ENCODE measurements at regions of chr5 and their contacts with region 1.

Region 1: GRCh38 chr5:31934156-31934555 is 240.0 kb downstream of the GOLPH3 start:
- DNase-seq: peak; percentile 46 to 60
- H3K4me3 ChIP-seq: no peak overlapping the region
- H3K27ac ChIP-seq: peak overlapping the region; percentile 50 to 74
- H3K4me1 ChIP-seq: no peaks in the 10 kb centered on the region
- H3K27me3 ChIP-seq: no peaks in the 10 kb centered on the region
- CTCF ChIP-seq: no peak
- POLR2A ChIP-seq: no peak

Region 2: GRCh38 chr5:31680528-31680927 is 253.6 kb before region 1 on chr5:
- intact Hi-C with region 1: no loop called
- DNase-seq: peak in 1 of 2 donors; percentile 21
- H3K4me3 ChIP-seq: no peak overlapping the region
- H3K27ac ChIP-seq: no peak overlapping the region
- H3K4me1 ChIP-seq: no peaks in the 10 kb centered on the region
- H3K27me3 ChIP-seq: no peaks in the 10 kb centered on the region
- CTCF ChIP-seq: no peak
- POLR2A ChIP-seq: no peak

Region 3: DNA sequence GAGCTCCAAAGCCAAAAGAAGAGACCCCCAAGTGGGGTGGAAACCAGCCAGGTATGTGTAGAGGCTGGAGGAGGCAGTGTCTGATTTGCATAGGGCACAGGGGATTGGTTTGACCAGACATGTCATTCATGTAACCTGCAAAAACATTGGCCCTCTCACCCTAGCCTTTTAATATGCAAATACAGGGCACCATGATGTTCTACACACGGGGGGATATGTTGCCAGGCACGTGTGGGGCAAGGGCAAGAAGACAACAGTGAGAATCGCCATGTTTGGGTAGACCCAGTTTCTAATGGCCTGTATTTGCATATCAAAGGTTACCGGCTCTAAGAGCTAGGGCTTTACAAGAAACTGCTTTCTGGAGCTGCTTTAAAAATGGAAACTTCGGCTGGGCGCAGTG is 31.1 kb after region 1 on chr5:
- intact Hi-C with region 1: no loop called
- DNase-seq: no peak
- H3K4me3 ChIP-seq: no peak overlapping the region
- H3K27ac ChIP-seq: no peak overlapping the region
- H3K4me1 ChIP-seq: no peaks in the 10 kb centered on the region
- H3K27me3 ChIP-seq: no peaks in the 10 kb centered on the region
- CTCF ChIP-seq: no peak
- POLR2A ChIP-seq: no peak

Region 4: DNA sequence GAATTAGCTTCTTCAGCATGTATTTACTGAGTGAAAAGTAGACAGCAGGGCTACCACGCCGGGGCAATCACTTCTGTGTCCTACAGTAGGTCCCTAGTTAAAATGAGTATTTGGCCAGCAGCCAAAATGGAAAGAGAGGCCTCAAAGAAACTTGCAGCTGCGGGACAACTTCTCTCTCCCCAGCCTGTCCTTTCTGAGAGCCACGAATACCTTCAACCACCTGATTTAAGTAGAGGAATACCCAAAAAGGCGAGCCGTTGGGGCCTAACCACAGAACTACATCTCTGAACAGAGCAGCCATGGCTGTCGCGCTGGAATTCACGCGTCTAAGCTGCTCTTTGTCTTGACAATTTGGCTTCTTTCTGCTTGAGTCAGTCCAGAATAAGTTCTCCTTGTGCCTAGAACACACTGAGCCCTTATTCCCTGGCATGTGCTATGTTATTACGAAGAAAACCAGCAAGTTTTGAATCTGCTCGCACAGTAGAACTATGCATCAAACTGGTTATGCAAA is 283.8 kb after region 1 on chr5:
- intact Hi-C with region 1: loop called (anchors 5 kb)
- DNase-seq: peak in 1 of 2 donors; percentile 37
- H3K4me3 ChIP-seq: no peak overlapping the region
- H3K27ac ChIP-seq: peak overlapping the region; percentile 64
- H3K4me1 ChIP-seq: no peaks in the 10 kb centered on the region
- H3K27me3 ChIP-seq: no peaks in the 10 kb centered on the region
- CTCF ChIP-seq: no peak
- POLR2A ChIP-seq: no peak